ENCODE measurements at regions of chr10 and their contacts with region 1.

Region 1: DNA sequence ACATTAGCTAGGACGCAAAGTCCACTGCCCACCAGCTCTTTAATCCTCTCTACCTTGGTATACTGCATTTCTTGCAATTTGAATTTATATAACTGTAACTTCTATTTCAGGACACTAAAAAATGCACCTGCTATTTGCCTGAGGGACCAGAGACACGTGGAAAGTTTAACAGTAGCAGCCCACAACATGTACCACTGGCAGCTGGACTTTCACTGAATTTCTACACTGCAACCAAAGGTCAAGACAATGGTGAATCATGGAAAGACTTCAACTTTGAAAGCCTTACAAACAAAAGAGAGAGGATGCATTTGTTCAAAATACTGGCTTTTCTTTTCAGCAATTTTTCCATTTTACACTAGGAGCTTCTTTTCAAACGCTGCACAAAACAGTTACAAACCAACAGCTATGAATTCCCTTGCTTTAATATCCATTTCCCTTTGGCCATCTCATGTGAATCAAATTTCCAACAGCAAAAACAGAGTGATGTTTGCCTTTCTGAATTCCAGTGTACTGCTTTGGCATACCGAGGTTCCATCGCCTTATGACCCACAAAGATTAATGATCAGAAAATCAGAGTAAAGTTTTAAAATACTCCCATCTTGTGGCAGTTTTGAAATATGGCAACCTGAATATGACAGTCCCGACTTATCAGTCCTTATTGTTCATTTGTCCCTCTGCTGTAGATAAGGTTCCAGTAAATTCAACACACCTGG is 29.9 kb upstream of the HNRNPH3 start:
- ATAC-seq: peak in 4 of 8 experiments; percentile 35 to 87 (median 78)
- H3K4me3 ChIP-seq: no peak overlapping the region
- H3K27ac ChIP-seq: no peak overlapping the region
- H3K4me1 ChIP-seq: no peaks in the 10 kb centered on the region

Region 2: DNA sequence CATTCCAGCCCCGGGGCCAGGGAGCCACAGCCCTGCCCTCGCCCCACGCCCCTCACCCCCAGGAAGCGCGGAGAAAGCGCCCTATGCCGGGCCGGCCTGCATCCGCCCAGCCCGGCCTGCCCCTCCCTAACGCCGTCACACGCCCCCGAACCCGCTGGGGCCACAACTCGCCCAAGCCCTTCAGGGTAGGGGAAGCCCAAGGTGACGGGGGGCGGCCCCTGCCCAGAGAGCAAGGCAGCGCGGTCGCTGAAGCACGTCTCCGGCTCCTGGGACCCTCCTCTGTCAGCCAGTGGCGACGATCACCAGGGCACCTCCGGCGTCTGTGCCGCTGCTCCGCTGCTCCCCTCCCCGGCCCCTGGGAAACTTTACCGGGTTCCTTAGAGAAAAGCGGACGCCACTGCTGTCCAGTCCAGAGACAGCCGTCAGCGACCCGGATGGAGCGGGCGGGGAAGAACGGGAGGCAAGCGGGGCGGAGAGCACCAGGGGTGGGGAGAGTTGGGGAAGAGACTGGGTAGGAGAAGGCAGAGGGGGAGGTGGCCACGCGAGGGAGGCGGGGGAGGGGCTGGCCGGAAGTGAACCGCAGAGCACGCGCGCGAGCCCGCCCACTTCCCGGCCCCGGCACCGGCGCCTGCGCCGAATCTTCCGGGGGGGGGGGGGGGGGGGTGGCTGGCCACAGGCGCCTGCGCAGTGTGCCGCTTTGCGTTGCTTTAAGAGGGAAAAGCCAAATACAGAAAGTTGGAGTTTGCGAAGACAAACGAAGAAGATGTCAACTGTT is 227.0 kb before region 1 on chr10 and contains the start of gene HERC4:
- in situ Hi-C with region 1: loop called in 3 of 9 experiments (anchors 25 kb)
- ATAC-seq: peak; percentile 90 to 96 (median 94)
- H3K4me3 ChIP-seq: peak within 1 kb of the TSS; percentile 73 to 99 (median 85)
- H3K27ac ChIP-seq: peak within 1 kb of the TSS; percentile 84 to 95
- H3K4me1 ChIP-seq: peaks cover 11 to 27% of the 10 kb centered on the region in 2 donors
- total RNA-seq, gene HERC4: 16.4 to 80.5 (median 40.3) TPM

Region 3: DNA sequence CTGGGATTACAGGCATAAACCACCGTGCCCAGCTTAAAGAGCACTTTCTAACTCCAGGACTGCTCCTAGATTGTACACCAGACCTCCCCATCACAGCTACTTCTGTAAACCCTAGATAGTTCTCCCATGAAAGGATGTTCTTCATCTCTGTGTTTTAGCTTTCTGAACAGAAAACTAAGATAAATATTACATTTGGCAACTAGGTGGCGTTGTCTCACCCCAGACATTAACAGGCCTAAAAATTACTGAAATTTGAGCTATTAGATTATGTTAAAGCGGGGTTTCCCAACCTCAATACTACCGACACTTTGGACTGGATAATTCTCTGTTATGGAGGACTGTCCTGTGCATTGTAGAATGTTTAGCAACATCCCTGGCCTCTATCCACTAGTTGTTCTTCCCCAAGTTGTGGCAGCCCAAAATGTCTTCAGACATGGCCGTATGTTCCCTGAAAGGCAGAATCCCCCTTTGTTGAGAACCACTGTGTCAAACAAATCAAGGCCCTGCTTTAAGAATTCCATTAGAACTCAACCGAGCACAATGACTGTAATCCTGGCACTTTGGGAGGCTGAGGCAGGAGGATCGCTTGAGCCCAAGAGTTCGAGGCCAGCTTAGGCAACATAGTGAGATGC is 89.1 kb before region 1 on chr10:
- in situ Hi-C with region 1: loop called in 1 of 9 experiments (anchors 10 kb)
- ATAC-seq: peak in 3 of 8 experiments; percentile 20 to 21 (median 21)
- H3K4me3 ChIP-seq: no peak overlapping the region
- H3K27ac ChIP-seq: no peak overlapping the region
- H3K4me1 ChIP-seq: no peaks in the 10 kb centered on the region

Measured in motor neuron (in vitro differentiated cells).